Activated naive CD4-positive, alpha-beta T cell treated with anti-CD3 and anti-CD28 coated beads for 36 hours (primary cell): ENCODE measurements at regions of chr10 and their contacts with region 1.

Region 1: DNA sequence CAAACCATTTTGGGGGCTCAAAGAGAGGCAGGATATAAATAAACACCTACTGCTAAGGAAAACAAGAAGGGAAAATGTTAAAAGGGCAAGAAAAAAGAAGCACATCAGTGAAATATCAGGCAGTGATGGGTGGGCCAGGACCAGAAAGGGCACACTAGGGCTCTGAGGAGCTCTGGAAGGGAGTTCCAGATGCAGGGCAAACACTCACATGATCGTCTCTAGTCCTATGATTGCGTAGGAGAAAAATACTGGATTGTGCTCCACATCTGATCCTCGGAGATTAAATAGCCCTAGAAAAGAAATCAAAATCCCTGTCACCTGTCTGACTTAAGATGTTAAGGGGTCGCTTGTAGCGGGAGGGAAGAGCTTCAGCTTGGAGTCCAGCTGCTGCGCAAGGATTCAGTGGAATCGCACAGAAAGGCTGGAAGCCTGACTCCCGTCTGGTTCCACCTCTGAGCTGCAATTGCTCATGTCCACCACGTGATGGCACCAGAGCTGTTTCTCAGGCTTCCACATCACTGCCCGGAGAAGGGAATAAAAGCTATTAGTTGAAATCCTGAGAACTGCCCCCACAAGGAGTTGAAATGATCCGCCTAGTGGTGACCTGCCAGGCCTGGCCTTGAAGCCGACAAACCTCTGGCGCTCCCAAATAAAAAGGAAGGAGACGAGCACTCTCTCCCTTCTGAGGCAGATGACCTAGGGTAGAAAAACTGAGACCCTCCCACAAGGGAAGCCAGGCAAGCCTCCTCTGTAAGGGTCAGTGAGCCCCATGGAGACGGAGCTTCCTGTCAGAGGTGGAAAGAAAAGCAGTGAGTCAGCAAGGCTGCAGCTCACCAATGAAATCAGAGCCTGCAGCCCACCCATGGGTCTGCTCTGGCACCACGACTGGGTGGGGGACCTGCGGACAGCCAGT is 39.2 kb downstream of the XPNPEP1 start:
- DNase-seq: peak; percentile 74
- H3K4me3 Mint-ChIP-seq: no peak overlapping the region
- H3K27ac Mint-ChIP-seq: no peak overlapping the region
- H3K4me1 Mint-ChIP-seq: peaks cover 9% of the 10 kb centered on the region
- H3K27me3 Mint-ChIP-seq: no peaks in the 10 kb centered on the region

Region 2: DNA sequence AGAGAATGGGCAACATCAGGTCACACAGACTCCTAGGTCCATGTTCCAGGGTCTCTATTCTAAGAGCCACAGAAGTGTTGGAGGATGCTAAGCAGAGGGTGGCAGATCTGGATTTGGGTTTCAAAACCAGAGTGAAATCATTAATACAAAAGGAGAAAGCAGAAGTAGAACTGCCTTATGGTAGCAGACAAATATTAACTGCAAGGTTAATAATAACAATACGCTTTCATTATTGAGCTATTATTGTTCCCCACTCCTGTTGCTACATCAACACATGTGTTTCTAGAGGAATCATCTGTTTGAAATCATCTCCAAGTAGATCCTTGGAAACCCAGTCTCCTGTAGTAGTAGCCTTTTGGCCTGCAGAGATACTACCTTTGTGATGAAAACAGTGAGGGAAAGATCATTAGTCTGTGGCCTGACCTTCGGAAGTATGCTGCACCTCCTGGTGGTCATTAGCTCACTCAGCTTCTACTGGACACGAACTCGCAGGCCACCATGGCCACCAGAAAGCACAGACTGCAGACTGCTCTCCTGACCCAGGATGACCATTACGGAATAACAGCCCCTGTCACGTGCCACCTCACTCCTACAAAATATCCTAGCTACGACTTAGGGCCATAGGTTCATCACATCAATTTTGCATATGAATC is 45.4 kb before region 1 on chr10:
- CTCF ChIA-PET with region 1: no interaction called
- intact Hi-C with region 1: no loop called
- DNase-seq: no peak
- H3K4me3 Mint-ChIP-seq: no peak overlapping the region
- H3K27ac Mint-ChIP-seq: no peak overlapping the region
- H3K4me1 Mint-ChIP-seq: no peaks in the 10 kb centered on the region
- H3K27me3 Mint-ChIP-seq: peaks cover 5% of the 10 kb centered on the region

Region 3: DNA sequence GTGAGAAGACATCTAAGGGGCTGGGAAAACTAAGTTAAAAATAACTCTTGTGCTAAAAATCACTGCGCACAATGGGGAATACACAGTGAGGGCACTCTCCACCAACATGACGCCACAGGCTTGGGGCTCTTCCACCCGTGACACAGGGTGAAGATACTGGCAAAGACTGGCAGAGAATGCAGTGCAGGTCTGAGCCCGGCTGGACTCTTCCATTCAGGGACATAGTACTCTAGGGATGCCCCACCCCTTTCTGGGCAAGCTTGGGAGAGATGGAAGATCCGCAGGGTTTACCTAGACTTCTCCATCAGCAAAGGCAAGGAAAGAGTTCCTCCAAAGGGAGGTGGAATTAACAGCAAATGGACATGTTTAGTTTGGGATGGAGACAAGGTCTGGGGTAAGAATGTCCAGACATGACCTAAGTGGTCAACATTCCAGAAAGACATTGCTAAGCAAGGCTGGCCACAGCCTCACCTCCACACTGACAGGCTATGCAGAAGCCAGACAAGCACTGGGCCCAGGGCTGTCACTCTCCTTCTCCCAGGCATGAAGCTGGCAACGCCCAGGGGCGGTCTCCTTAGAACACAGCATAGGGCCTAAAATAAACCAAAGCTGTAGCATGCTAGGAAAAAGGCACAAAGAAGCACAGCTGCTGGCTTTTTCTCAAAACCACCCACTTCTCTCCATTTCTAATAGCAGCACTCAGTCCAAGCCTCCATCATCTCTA is 11.1 kb after region 1 on chr10:
- CTCF ChIA-PET with region 1: interaction called, 15 read pairs
- intact Hi-C with region 1: no loop called
- DNase-seq: no peak
- H3K4me3 Mint-ChIP-seq: no peak overlapping the region
- H3K27ac Mint-ChIP-seq: no peak overlapping the region
- H3K4me1 Mint-ChIP-seq: peaks cover 30% of the 10 kb centered on the region
- H3K27me3 Mint-ChIP-seq: no peaks in the 10 kb centered on the region

Region 4: DNA sequence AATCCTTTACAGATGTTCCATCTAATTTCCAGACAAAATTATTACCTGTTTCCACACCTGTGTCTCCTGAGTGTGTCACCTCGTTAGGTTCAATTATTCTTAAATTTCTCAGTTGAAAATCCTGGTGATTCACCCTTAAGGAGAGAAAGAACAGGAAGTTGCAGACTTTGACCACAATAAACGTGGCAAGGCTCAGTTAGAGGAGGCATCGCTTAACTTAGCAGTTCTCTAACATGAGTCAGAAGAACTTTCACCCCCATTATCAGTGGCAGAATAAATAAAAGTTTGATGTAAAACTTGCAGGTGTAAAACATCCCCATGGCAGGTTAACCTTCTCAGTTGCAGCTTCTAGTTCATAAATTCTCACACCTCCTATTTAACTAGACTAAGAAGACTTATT is 30.9 kb after region 1 on chr10:
- CTCF ChIA-PET with region 1: interaction called, 16 read pairs
- intact Hi-C with region 1: no loop called
- DNase-seq: peak; percentile 72
- H3K4me3 Mint-ChIP-seq: no peak overlapping the region
- H3K27ac Mint-ChIP-seq: peak overlapping the region; percentile 67
- H3K4me1 Mint-ChIP-seq: peaks cover 86% of the 10 kb centered on the region
- H3K27me3 Mint-ChIP-seq: no peaks in the 10 kb centered on the region

Region 5: GRCh38 chr10:109934958-109935706 is 51.0 kb after region 1 on chr10:
- CTCF ChIA-PET with region 1: interaction called, 14 read pairs
- intact Hi-C with region 1: no loop called
- DNase-seq: peak; percentile 41
- H3K4me3 Mint-ChIP-seq: peak overlapping the region; percentile 75
- H3K27ac Mint-ChIP-seq: peak overlapping the region; percentile 93
- H3K4me1 Mint-ChIP-seq: peaks cover 74% of the 10 kb centered on the region
- H3K27me3 Mint-ChIP-seq: no peaks in the 10 kb centered on the region

Region 6: GRCh38 chr10:109978481-109978880 is 94.4 kb after region 1 on chr10:
- CTCF ChIA-PET with region 1: interaction called, 10 read pairs
- intact Hi-C with region 1: loop called (anchors 1 kb)
- DNase-seq: peak; percentile 87
- H3K4me3 Mint-ChIP-seq: no peak overlapping the region
- H3K27ac Mint-ChIP-seq: no peak overlapping the region
- H3K4me1 Mint-ChIP-seq: peaks cover 14% of the 10 kb centered on the region
- H3K27me3 Mint-ChIP-seq: no peaks in the 10 kb centered on the region

Region 7: GRCh38 chr10:110036640-110037039 is 152.5 kb after region 1 on chr10:
- CTCF ChIA-PET with region 1: interaction called, 7 read pairs
- intact Hi-C with region 1: loop called (anchors 1 kb)
- DNase-seq: no peak
- H3K4me3 Mint-ChIP-seq: no peak overlapping the region
- H3K27ac Mint-ChIP-seq: peak overlapping the region; percentile 91
- H3K4me1 Mint-ChIP-seq: peaks cover 91% of the 10 kb centered on the region
- H3K27me3 Mint-ChIP-seq: no peaks in the 10 kb centered on the region

Region 8: DNA sequence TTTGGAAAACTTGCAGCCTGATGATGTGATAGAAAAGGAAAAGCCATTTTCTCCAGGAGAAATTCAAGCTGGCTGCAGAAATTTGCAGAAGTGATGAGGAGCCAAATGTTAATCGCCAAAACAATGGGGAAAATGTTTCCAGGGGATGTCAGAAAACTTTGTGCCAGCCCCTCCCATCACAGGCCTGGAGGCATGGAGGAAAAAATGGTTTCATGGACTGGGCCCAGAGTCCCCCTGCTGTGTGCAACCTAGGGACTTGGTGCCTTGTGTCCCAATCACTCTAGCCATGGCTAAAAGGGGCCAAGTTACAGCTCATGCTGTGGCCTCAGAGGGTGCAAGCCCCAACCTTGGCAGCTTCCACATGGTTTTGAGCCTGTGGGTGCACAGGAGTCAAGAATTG is 164.7 kb after region 1 on chr10:
- CTCF ChIA-PET with region 1: no interaction called
- intact Hi-C with region 1: no loop called
- DNase-seq: no peak
- H3K4me3 Mint-ChIP-seq: no peak overlapping the region
- H3K27ac Mint-ChIP-seq: no peak overlapping the region
- H3K4me1 Mint-ChIP-seq: peaks cover 76% of the 10 kb centered on the region
- H3K27me3 Mint-ChIP-seq: no peaks in the 10 kb centered on the region

Region 9: DNA sequence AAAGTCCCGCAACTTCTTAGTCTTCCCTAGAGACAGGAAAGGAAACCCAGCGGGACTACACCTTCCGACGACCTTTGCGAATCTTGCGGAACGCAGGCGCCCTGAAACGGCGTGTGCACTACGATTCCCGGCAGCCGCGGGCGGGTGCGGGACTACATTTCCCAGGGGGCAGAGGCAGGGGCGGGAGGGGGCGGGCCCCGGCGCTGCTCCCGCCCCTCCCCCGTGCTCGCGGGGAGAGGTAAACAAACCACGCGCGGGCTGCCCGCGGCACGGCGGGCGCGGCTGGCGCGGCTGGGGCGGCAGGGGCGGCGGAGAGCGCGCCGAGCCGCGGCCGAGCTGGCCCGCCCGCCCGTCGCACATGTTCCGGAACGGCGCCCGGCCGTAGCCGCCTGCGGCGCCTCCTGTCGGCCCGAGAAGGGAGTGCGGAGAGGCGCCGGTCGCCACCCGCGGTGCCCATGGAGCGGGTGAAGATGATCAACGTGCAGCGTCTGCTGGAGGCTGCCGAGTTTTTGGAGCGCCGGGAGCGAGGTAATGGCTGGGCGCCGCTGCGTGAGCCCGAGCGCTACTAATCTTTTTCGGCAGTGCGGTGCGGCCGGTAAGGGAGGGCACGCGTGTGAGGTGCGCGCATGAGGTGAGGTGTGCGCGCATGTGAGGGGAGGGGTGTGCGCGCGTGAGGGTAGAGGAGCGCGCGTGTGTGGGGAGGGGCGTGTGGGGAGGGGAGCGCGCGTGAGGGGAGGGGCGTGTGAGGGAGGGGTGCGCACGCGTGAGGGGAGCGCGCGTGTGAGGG is 341.8 kb after region 1 on chr10:
- CTCF ChIA-PET with region 1: no interaction called
- intact Hi-C with region 1: loop called (anchors 10 kb)
- DNase-seq: peak; percentile 93
- H3K4me3 Mint-ChIP-seq: peak overlapping the region; percentile 97
- H3K27ac Mint-ChIP-seq: peak overlapping the region; percentile 94
- H3K4me1 Mint-ChIP-seq: peaks cover 47% of the 10 kb centered on the region
- H3K27me3 Mint-ChIP-seq: no peaks in the 10 kb centered on the region